ENCODE measurements at regions of chr22 and their contacts with region 1.

Region 1: DNA sequence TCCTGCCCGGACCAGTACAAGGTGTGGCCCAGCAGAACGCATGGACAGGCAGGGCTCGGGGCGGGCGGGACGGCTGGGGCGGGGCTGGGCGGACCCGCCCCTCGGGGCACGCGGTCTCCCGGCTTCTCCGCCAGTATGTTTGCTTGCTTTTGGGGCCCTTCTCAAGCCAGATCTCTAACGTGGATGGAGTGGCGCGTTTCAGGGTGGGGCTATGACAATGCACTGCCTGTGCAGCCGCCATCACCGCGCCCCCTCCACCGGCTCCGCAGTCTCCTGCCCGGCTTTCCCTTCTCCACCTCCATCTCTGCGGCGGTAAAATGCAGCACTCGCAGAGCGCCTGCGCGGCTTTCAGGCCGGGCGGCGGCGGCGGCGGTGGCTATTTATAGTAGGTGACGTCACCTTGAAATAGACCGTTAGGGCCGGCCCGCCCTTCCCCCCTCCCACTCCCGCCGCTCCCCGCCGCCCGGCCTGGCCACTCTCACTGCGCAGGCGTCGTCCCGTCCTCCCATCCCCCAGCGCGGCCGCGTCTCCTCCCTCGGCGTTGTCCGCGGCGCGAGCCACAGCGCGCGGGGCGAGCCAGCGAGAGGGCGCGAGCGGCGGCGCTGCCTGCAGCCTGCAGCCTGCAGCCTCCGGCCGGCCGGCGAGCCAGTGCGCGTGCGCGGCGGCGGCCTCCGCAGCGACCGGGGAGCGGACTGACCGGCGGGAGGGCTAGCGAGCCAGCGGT is at the start of gene YWHAH:
- DNase-seq: peak; percentile 96
- ATAC-seq: peak; percentile 85
- H3K4me3 ChIP-seq: peak within 1 kb of the TSS; percentile 67 to 78 (median 75)
- H3K4me3 Mint-ChIP-seq: no peak within 1 kb of the TSS
- H3K27ac ChIP-seq: peak within 1 kb of the TSS; percentile 82 to 85
- H3K27ac Mint-ChIP-seq: peak within 1 kb of the TSS; percentile 97
- H3K4me1 ChIP-seq: peaks cover 29 to 31% of the 10 kb centered on the region in 2 donors
- H3K4me1 Mint-ChIP-seq: peaks cover 18% of the 10 kb centered on the region
- H3K27me3 ChIP-seq: no peaks in the 10 kb centered on the region
- H3K27me3 Mint-ChIP-seq: no peaks in the 10 kb centered on the region
- CTCF ChIP-seq: no peak
- total RNA-seq, gene YWHAH: 46.6 and 51.1 TPM in 2 replicates

Region 2: DNA sequence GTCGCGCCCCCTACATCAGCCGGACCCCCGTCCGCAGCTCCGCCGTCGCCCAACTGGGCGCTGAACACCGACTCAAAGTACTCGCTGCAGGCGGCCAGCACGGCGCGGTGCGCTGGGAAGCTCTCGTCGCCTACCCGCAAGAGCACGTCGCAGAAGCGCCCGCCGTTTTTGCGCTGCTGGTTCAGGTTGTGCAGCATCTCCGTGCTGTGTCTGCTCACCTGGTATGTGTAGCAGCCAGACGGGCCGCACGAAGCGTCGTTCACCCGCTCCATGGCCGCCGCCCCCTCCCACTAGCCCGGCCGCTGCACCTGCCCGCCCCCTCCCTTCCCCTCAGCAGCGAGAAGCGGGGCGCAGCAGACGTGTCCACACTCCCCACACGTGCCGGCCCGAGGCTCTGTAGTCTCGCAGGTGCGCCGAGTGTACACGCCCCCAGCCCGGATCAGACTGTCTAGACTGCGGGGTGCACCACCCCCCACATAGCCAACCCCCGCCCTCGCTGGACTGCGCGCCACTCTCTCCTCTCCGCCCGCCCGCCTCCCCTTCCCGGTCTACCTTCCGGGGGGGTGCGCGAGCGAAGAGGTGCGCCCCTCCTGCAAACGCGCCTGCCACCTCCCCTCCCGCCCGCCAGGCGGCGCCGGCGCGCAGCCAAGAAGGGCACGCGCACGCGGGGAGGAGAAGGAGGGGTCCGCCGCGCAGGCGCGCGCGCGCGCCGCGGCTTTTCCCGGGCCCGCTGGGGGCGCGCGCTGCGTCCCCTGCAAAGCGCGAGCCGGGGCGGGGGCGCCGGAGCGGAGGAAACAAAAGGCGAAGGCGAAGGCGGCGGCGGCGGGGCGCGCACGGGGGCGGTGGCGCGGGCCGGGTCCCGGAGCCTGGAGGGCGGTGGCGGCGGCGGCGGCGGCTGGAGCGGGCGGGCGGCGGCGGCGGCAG is 598.5 kb before region 1 on chr22:
- CTCF ChIA-PET with region 1: interaction called, 4 read pairs
- POLR2A ChIA-PET with region 1: no interaction called
- intact Hi-C with region 1: loop called (anchors 2 kb)
- DNase-seq: peak; percentile 94
- ATAC-seq: peak; percentile 65
- H3K4me3 ChIP-seq: peak overlapping the region in 4 of 5 experiments; percentile 62 to 74 (median 70)
- H3K4me3 Mint-ChIP-seq: peak overlapping the region; percentile 81
- H3K27ac ChIP-seq: peak overlapping the region; percentile 36 to 63
- H3K27ac Mint-ChIP-seq: peak overlapping the region; percentile 86
- H3K4me1 ChIP-seq: peaks cover 32 to 53% of the 10 kb centered on the region in 2 donors
- H3K4me1 Mint-ChIP-seq: peaks cover 51% of the 10 kb centered on the region
- H3K27me3 ChIP-seq: no peaks in the 10 kb centered on the region
- H3K27me3 Mint-ChIP-seq: no peaks in the 10 kb centered on the region
- CTCF ChIP-seq: peak; percentile 79

Region 3: GRCh38 chr22:31802575-31802974 is 141.6 kb before region 1 on chr22:
- CTCF ChIA-PET with region 1: no interaction called
- POLR2A ChIA-PET with region 1: interaction called, 10 read pairs
- intact Hi-C with region 1: no loop called
- DNase-seq: no peak
- ATAC-seq: no peak
- H3K4me3 ChIP-seq: no peak overlapping the region
- H3K4me3 Mint-ChIP-seq: no peak overlapping the region
- H3K27ac ChIP-seq: no peak overlapping the region
- H3K27ac Mint-ChIP-seq: no peak overlapping the region
- H3K4me1 ChIP-seq: no peaks in the 10 kb centered on the region
- H3K4me1 Mint-ChIP-seq: no peaks in the 10 kb centered on the region
- H3K27me3 ChIP-seq: no peaks in the 10 kb centered on the region
- H3K27me3 Mint-ChIP-seq: no peaks in the 10 kb centered on the region
- CTCF ChIP-seq: no peak

Region 4: GRCh38 chr22:31841078-31841827 is 102.9 kb before region 1 on chr22:
- CTCF ChIA-PET with region 1: no interaction called
- POLR2A ChIA-PET with region 1: no interaction called
- intact Hi-C with region 1: loop called (anchors 5 kb)
- DNase-seq: no peak
- ATAC-seq: no peak
- H3K4me3 ChIP-seq: no peak overlapping the region
- H3K4me3 Mint-ChIP-seq: peak overlapping the region; percentile 50
- H3K27ac ChIP-seq: peak overlapping the region in 1 of 2 donors; percentile 17
- H3K27ac Mint-ChIP-seq: peak overlapping the region; percentile 47
- H3K4me1 ChIP-seq: peaks cover 0 to 5% of the 10 kb centered on the region in 2 donors
- H3K4me1 Mint-ChIP-seq: peaks cover 11% of the 10 kb centered on the region
- H3K27me3 ChIP-seq: no peaks in the 10 kb centered on the region
- H3K27me3 Mint-ChIP-seq: no peaks in the 10 kb centered on the region
- CTCF ChIP-seq: no peak

Region 5: DNA sequence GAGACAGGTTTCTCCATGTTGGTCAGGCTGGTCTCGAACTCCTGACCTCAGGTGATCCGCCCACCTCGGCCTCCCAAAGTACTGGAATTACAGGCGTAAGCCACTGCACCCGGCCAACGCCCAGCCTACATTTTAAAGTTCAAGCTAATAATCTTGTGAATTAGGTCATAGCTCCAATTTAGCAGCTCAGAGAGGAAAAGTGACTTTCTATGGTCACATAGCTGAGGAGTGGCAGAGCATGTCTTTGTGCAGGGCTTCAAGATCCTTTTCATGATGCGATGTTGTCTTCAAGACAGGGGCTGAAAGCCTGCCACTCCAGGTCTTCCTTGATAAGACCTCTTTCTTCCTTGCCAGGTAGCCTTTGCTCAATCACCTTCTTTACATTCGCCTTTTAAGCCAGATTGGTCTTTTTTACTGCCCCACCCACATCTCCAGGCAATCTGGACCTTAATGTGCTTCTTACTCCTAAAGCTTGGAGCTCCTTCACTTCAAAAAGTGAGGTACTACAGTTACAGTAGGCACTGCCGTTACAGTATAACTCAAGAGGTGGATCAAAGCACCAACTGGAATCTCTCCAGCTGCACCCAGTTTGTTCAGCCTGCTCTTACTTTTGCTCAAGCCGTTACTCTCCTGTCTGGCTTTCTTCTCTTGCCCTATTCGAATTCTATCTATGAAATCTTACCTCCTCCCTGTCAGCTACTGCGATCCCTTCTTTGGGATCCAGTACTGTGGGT is 18.4 kb after region 1 on chr22:
- CTCF ChIA-PET with region 1: interaction called, 10 read pairs
- POLR2A ChIA-PET with region 1: no interaction called
- intact Hi-C with region 1: no loop called
- DNase-seq: no peak
- ATAC-seq: no peak
- H3K4me3 ChIP-seq: no peak overlapping the region
- H3K4me3 Mint-ChIP-seq: no peak overlapping the region
- H3K27ac ChIP-seq: no peak overlapping the region
- H3K27ac Mint-ChIP-seq: no peak overlapping the region
- H3K4me1 ChIP-seq: no peaks in the 10 kb centered on the region
- H3K4me1 Mint-ChIP-seq: no peaks in the 10 kb centered on the region
- H3K27me3 ChIP-seq: peaks cover 0 to 4% (median 0%) of the 10 kb centered on the region in 4 experiments
- H3K27me3 Mint-ChIP-seq: peaks cover 3% of the 10 kb centered on the region
- CTCF ChIP-seq: no peak

Region 6: GRCh38 chr22:32050678-32051515 is 106.8 kb after region 1 on chr22:
- CTCF ChIA-PET with region 1: no interaction called
- POLR2A ChIA-PET with region 1: no interaction called
- intact Hi-C with region 1: no loop called
- DNase-seq: no peak
- ATAC-seq: no peak
- H3K4me3 ChIP-seq: no peak overlapping the region
- H3K4me3 Mint-ChIP-seq: no peak overlapping the region
- H3K27ac ChIP-seq: no peak overlapping the region
- H3K27ac Mint-ChIP-seq: no peak overlapping the region
- H3K4me1 ChIP-seq: no peaks in the 10 kb centered on the region
- H3K4me1 Mint-ChIP-seq: no peaks in the 10 kb centered on the region
- H3K27me3 ChIP-seq: peaks cover 0 to 4% (median 1%) of the 10 kb centered on the region in 4 experiments
- H3K27me3 Mint-ChIP-seq: peaks cover 38% of the 10 kb centered on the region
- CTCF ChIP-seq: no peak